ENCODE measurements at regions of chr9 and their contacts with region 1.

Region 1: DNA sequence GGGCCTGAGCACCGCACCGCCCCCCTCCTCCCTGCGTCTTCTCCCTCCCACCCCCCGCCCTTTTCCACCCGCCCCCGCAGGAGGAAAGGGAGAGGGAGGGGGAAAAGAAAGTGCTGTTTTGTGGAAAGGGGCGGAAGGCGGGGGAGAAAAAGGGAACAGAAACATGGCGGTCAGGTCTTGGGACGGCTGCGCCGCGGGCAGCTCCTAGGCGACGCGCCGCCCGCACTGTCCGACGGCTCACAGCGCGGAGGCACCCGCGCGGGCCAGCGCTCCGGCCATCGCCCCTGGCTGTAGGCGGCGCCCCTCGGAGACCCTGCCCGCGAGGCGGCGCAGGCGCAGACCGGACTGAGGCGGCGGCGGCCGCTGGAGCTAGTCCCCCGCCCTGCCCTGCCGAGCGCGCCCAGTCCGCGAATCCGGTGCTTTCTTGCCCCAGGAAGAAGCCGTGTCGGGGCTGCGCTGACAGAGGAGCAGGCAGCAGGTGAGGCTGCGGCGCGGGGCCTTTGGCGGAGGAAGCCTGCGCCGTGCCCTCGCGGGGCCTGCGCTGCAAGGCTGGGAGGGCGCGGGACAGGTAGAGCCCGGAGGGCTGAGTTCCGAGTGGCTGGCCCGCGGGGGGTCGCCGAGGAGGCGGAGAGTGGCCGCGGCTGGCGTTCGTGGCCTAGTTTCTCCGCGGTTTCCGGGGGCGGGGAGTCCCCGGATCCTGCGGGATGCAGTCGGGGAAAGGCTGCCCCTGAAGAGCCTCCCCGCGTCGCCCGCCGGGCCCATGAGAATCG is at the start of gene DENND4C:
- DNase-seq: peak; percentile 88 to 95 (median 90)
- ATAC-seq: peak; percentile 74 to 96 (median 90)
- H3K4me3 ChIP-seq: peak within 1 kb of the TSS; percentile 84 to 100 (median 97)
- H3K27ac ChIP-seq: peak within 1 kb of the TSS; percentile 95 to 100 (median 99)
- H3K4me1 ChIP-seq: peaks cover 0 to 31% (median 22%) of the 10 kb centered on the region in 12 donors
- H3K27me3 ChIP-seq: no peaks in the 10 kb centered on the region
- CTCF ChIP-seq: peak in 5 of 12 donors; percentile 19 to 42 (median 28)
- POLR2A ChIP-seq: peak in 1 of 2 donors; percentile 83
- total RNA-seq, gene DENND4C: 19.4 to 36.9 (median 24.5) TPM

Region 2: GRCh38 chr9:18874069-18874468 is 356.5 kb before region 1 on chr9:
- intact Hi-C with region 1: no loop called
- DNase-seq: no peak
- ATAC-seq: no peak
- H3K4me3 ChIP-seq: no peak overlapping the region
- H3K27ac ChIP-seq: no peak overlapping the region
- H3K4me1 ChIP-seq: no peaks in the 10 kb centered on the region
- H3K27me3 ChIP-seq: no peaks in the 10 kb centered on the region
- CTCF ChIP-seq: no peak
- POLR2A ChIP-seq: no peak

Region 3: DNA sequence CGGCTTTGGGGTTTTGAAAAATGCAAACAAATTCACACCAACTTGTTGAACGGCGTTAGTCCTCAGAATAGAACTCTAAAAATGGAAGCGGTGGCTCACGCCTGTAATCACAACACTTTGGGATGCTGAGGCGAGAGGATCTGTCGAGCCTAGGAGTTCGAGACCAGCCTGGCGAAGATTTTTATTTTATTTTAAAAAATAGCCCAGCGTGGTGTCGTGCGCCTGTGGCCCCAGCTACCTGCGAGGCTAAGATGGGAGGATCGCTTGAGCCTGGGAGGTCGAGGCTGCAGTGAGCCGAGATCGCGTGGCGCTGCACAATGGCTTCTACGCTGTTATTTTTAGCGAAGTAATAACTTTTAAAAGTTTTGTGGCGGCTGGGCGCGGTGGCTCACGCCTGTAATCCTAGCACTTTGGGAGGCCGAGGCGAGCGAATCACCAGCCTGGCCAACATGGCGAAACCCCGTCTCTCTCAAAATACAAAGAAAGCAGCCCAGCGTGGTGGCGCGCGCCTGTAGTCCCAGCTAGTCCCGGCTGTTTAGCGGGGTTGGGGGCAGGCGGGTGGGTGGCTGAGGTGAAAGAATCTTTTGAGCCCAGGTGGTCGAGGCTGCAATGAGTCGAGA is 102.5 kb before region 1 on chr9:
- intact Hi-C with region 1: loop called in 2 of 10 experiments (anchors 1 to 2 kb)
- DNase-seq: peak; percentile 16 to 72 (median 46)
- ATAC-seq: peak; percentile 20 to 43 (median 42)
- H3K4me3 ChIP-seq: peak overlapping the region; percentile 58 to 95 (median 82)
- H3K27ac ChIP-seq: peak overlapping the region; percentile 89 to 100 (median 97)
- H3K4me1 ChIP-seq: peaks cover 4 to 62% (median 26%) of the 10 kb centered on the region in 12 donors
- H3K27me3 ChIP-seq: no peaks in the 10 kb centered on the region
- CTCF ChIP-seq: no peak
- POLR2A ChIP-seq: no peak

Region 4: GRCh38 chr9:19184144-19184917 is 46.2 kb before region 1 on chr9:
- intact Hi-C with region 1: loop called in 2 of 10 experiments (anchors 1 to 5 kb)
- DNase-seq: peak; percentile 72 to 81 (median 75)
- ATAC-seq: peak; percentile 90 to 97 (median 96)
- H3K4me3 ChIP-seq: no peak overlapping the region
- H3K27ac ChIP-seq: peak overlapping the region; percentile 67 to 91 (median 84)
- H3K4me1 ChIP-seq: peaks cover 5 to 42% (median 32%) of the 10 kb centered on the region in 12 donors
- H3K27me3 ChIP-seq: no peaks in the 10 kb centered on the region
- CTCF ChIP-seq: no peak
- POLR2A ChIP-seq: no peak

Region 5: DNA sequence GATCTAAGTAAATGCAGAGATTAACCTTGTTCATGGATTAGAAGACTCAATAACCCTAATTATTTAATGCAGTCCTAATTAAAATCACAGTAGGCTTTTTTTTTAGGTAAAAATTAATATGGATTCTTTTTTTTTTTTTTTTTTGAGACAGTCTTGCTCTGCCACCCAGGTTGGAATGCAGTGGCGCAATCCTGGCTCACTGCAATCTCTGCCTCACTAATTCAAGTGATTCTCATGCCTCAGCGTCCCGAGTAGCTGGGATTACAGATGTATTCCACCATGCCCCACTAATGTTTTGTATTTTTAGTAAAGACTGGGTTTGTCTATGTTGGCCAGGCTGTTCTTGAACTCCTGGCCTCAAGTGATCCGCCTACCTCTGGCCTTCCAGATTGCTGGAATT is 40.5 kb after region 1 on chr9:
- intact Hi-C with region 1: loop called in 1 of 10 experiments (anchors 5 kb)
- DNase-seq: no peak
- ATAC-seq: no peak
- H3K4me3 ChIP-seq: no peak overlapping the region
- H3K27ac ChIP-seq: no peak overlapping the region
- H3K4me1 ChIP-seq: peaks cover 0 to 19% (median 2%) of the 10 kb centered on the region in 12 donors
- H3K27me3 ChIP-seq: no peaks in the 10 kb centered on the region
- CTCF ChIP-seq: no peak
- POLR2A ChIP-seq: no peak

Region 6: DNA sequence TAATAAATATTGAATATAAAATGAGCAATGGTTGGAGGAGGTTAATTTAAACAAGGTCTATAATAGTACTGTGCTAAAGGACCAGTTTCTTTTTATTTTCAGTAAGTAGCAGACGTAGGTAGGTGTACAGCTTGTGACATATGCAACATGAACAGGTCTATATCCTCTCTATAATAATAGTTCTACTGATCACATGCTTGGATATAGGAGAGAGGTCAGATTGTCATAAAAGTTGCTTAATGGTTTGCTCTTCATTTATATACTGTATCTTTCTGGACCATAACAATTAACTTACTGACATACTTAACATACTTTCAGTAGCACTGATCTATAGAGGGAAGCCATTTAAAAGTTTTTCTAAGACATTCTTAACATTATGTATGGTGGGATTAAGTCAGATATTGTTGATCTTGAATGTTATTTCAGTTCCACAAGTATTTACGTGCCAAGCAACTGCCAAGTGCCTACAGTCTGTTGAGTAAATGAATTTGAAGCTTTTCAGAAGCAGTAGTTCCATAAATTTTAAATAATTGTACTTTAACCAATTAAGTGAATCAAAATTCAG is 68.0 kb after region 1 on chr9:
- intact Hi-C with region 1: loop called in 2 of 10 experiments (anchors 10 kb)
- DNase-seq: no peak
- ATAC-seq: no peak
- H3K4me3 ChIP-seq: no peak overlapping the region
- H3K27ac ChIP-seq: no peak overlapping the region
- H3K4me1 ChIP-seq: peaks cover 0 to 7% (median 0%) of the 10 kb centered on the region in 12 donors
- H3K27me3 ChIP-seq: no peaks in the 10 kb centered on the region
- CTCF ChIP-seq: no peak
- POLR2A ChIP-seq: no peak

Region 7: DNA sequence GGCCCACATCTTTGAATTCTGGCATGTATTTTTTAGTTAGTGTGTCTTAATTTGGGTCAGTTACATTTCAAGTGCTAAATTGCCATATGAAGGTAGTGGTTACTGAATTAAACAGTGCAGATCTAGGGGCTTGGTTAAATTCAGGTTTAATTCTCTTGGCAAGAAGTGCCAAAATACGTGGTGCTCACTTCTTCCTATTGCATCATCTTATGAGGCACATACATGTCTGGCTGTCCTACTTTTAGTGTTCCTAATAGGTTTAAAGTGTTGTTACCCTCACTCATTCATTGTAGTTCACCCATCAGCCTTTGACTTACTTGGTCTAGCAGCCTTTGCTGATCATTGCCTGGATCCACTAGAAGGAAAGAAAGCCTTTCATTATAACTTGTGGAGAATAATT is 90.0 kb after region 1 on chr9:
- intact Hi-C with region 1: loop called in 1 of 10 experiments (anchors 10 kb)
- DNase-seq: no peak
- ATAC-seq: no peak
- H3K4me3 ChIP-seq: no peak overlapping the region
- H3K27ac ChIP-seq: no peak overlapping the region
- H3K4me1 ChIP-seq: no peaks in the 10 kb centered on the region
- H3K27me3 ChIP-seq: no peaks in the 10 kb centered on the region
- CTCF ChIP-seq: no peak
- POLR2A ChIP-seq: no peak

Measured in heart left ventricle (tissue), 16 donors.